Common myeloid progenitor, CD34-positive (primary cell): ENCODE measurements at regions of chr20 and their contacts with region 1.

Region 1: GRCh38 chr20:31661625-31662371 is 24.1 kb downstream of the COX4I2 start:
- DNase-seq: peak; percentile 62 to 71 (median 70)
- H3K4me3 ChIP-seq: peak overlapping the region in 6 of 7 experiments; percentile 35 to 78 (median 56)
- H3K27ac ChIP-seq: peak overlapping the region in 1 of 2 experiments; percentile 37
- H3K4me1 ChIP-seq: peaks cover 0 to 37% (median 21%) of the 10 kb centered on the region in 4 experiments
- H3K27me3 ChIP-seq: no peaks in the 10 kb centered on the region

Region 2: GRCh38 chr20:31560094-31560899 is 101.5 kb before region 1 on chr20:
- CTCF ChIA-PET with region 1: interaction called, 26 read pairs
- POLR2A ChIA-PET with region 1: no interaction called
- DNase-seq: peak; percentile 86 to 95 (median 92)
- H3K4me3 ChIP-seq: no peak overlapping the region
- H3K27ac ChIP-seq: peak overlapping the region in 1 of 2 experiments; percentile 50
- H3K4me1 ChIP-seq: peaks cover 0 to 16% (median 13%) of the 10 kb centered on the region in 4 experiments
- H3K27me3 ChIP-seq: no peaks in the 10 kb centered on the region

Region 3: DNA sequence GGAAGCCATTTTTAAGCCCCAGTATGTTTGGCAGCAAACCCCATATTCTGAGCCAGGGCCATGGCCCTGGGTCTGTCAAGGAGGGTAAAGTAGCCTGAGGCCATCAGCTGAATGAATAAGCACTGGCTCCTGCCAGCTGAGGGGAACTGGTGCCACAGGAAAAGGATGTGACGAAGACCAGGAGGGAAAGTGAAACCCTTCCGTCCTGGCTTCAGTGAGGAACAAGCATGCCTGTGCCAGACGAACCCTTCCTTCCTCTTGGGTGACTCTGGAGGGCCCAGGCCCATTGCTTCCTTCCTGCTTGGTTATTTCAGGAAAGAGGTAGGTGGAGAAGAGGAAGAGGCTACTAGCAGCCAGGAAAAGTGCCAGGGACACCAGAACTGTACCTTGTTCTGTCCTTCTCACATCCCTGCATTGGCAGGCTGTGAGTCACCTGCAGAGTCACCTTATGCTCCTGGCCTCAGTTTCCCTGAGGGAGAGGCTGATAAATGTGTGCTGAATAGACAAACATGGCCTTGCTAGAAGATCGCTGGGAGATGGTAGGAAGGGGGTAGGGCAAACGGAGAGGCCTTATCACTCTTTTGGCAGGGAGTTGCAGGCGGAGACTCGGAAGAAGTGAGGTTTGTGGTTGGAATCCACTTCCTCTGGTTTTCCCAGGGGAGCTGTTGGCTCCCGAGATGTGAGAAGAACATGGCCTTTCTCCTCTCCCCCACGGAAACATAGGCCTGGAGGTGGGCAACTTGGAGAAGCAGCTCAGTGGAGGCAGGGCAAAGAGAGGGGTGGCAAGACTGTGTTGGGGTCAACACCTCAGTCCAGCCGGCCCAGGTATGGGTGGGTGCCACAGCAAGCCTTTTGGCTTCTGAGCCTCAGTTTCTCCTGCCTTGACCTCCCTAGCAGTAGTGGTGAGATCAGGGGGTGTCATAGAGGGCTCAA is 13.4 kb after region 1 on chr20:
- CTCF ChIA-PET with region 1: interaction called, 25 read pairs
- POLR2A ChIA-PET with region 1: interaction called, 12 read pairs
- DNase-seq: peak; percentile 97 to 99 (median 98)
- H3K4me3 ChIP-seq: peak overlapping the region in 6 of 7 experiments; percentile 23 to 68 (median 59)
- H3K27ac ChIP-seq: peak overlapping the region; percentile 43 to 88
- H3K4me1 ChIP-seq: peaks cover 20 to 90% (median 78%) of the 10 kb centered on the region in 4 experiments
- H3K27me3 ChIP-seq: no peaks in the 10 kb centered on the region

Region 4: GRCh38 chr20:31691646-31692275 is 30.0 kb after region 1 on chr20:
- CTCF ChIA-PET with region 1: interaction called, 43 read pairs
- POLR2A ChIA-PET with region 1: no interaction called
- DNase-seq: peak in 2 of 3 donors; percentile 26 to 60
- H3K4me3 ChIP-seq: no peak overlapping the region
- H3K27ac ChIP-seq: peak overlapping the region in 1 of 2 experiments; percentile 36
- H3K4me1 ChIP-seq: peaks cover 0 to 45% (median 29%) of the 10 kb centered on the region in 4 experiments
- H3K27me3 ChIP-seq: no peaks in the 10 kb centered on the region

Region 5: DNA sequence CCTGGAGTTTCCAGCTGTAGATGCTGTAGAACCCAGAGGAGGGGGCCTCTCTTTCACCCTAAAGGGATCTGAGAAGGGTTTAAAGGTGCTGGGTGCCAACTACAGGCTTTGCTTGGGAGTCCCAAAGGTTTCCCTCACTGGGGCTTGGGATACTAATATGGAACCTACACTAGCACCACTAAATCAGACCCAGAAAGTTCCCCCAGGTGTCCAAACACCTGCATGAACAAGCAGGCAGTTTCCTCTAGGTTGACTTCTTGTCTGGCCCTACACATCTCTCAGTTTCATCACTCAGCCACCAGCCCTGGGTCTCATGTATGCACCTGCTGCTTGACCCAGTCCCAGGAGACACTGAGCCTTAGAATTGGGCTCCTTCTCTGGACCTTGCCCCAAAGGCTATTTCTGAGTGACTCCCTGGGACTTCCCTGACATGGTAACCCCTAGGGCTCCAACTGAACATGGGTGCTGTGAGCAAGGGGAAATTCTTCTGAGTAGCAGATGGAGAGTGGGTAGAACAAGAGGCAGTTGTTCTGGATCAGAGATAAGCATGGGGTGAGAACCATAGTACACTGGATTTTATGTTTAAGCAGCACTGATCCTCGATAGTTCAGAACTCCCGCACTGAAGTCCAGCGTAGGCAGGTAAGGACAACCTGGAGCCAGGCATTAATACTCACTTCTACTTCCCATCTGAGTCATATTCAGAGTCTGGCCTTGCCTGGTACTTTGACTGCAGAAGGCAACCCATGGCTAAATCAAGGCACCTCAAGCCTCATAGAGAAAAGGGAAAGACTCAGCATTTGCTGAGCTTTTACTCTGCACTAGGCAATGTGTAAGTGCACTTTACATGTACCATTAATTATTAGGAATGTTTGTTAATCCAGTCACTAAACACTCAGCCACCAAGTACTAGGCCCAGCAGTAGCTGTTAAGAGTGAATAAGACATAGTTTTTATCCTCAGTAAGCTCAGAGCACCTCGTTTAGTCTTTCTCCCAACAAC is 44.1 kb after region 1 on chr20:
- CTCF ChIA-PET with region 1: interaction called, 21 read pairs
- POLR2A ChIA-PET with region 1: no interaction called
- DNase-seq: no peak
- H3K4me3 ChIP-seq: no peak overlapping the region
- H3K27ac ChIP-seq: peak overlapping the region in 1 of 2 experiments; percentile 12
- H3K4me1 ChIP-seq: peaks cover 6 to 26% (median 14%) of the 10 kb centered on the region in 4 experiments
- H3K27me3 ChIP-seq: no peaks in the 10 kb centered on the region

Region 6: DNA sequence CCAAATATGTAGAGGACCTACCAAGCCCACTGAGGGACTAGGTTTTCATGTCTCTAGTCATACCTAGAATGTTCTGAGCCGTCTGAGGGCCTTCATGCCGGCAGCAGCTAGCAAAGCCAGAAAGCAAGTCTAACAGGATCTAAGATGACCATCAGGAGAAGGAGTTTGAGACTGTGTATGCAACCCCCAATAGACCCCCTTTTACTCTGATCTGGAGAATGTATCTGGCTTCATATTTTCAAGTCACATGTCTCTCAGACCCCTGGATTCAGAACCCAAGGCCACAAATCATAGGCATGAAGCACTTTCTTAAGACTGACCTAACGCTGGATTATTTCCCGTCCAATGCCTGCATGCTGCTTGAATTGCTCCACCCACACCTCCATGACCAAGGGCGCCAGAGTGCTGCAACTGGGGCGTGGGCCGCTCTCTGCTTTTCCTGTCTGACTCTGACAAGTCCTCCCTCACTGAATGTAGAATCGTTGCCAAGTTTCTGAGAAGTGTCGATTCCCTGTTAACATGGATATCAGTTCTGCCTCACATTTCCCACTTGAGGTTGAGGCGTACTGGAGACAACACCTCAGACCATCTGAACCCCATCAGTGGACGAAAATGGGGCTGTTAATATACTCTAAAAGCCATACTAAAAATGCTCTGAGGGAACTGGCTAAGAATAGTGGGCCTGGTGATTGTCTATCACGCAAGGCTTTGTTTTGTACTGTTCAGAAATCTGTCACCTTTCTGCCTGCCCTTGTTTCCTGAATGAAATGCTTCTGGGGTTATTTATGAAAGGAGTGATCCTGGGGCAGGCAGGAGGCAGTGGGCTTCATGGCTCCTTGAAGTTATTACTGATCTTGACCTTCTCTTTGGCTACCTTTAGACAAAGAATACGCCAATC is 672.4 kb after region 1 on chr20:
- CTCF ChIA-PET with region 1: no interaction called
- POLR2A ChIA-PET with region 1: no interaction called
- DNase-seq: peak; percentile 11 to 45 (median 34)
- H3K4me3 ChIP-seq: no peak overlapping the region
- H3K27ac ChIP-seq: peak overlapping the region; percentile 35 to 41
- H3K4me1 ChIP-seq: peaks cover 0 to 21% (median 10%) of the 10 kb centered on the region in 4 experiments
- H3K27me3 ChIP-seq: no peaks in the 10 kb centered on the region